Endothelial cell of umbilical vein (primary cell): ENCODE measurements at regions of chr3 and their contacts with region 1.

Region 1: GRCh38 chr3:10417849-10418248 is 87.5 kb downstream of the ATP2B2 start:
- DNase-seq: peak; percentile 3
- H3K4me3 ChIP-seq: no peak overlapping the region
- H3K27ac ChIP-seq: no peak overlapping the region
- H3K4me1 ChIP-seq: no peaks in the 10 kb centered on the region
- H3K27me3 ChIP-seq: no peaks in the 10 kb centered on the region
- CTCF ChIP-seq: no peak
- POLR2A ChIP-seq: no peak

Region 2: GRCh38 chr3:10395671-10396070 is 22.2 kb before region 1 on chr3:
- CTCF ChIA-PET with region 1: no interaction called
- POLR2A ChIA-PET with region 1: no interaction called
- dilution Hi-C with region 1: no loop called
- intact Hi-C with region 1: no loop called
- DNase-seq: no peak
- H3K4me3 ChIP-seq: no peak overlapping the region
- H3K27ac ChIP-seq: no peak overlapping the region
- H3K4me1 ChIP-seq: no peaks in the 10 kb centered on the region
- H3K27me3 ChIP-seq: no peaks in the 10 kb centered on the region
- CTCF ChIP-seq: no peak
- POLR2A ChIP-seq: no peak

Region 3: DNA sequence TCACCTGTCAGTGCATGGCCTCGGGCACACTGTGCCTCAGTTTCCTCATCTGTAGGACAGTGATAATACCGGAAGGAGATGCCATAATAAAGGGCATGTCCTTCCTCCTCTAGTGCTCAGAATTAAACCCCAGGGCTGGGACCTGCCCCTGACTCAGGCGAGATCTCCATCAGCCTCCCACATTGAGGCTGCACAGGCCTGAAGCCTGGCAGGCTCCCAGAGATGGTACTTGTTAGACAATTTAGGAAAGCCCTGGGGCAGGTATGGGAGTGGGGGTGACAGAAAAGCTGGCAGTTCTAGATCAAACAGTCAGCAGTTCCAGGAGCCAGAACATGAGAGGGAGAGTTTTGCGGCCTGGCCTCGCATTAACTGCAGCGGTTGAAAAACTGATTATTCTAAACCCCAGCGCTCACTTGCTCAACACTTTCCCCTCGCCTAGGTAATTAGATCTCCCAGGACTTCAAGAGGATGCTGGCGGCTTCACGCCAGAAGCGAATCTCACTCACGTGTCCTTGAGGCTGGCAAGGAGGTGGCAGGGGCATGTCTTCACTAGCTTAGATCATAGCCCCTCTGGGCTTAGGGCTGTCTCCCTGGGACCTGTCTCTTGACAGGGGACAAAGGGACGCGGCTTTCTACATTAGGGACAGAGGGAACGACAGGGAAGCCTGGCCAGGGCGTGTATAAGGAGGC is 14.5 kb after region 1 on chr3:
- CTCF ChIA-PET with region 1: no interaction called
- POLR2A ChIA-PET with region 1: no interaction called
- dilution Hi-C with region 1: no loop called
- intact Hi-C with region 1: no loop called
- DNase-seq: no peak
- H3K4me3 ChIP-seq: no peak overlapping the region
- H3K27ac ChIP-seq: no peak overlapping the region
- H3K4me1 ChIP-seq: peaks cover 4% of the 10 kb centered on the region
- H3K27me3 ChIP-seq: no peaks in the 10 kb centered on the region
- CTCF ChIP-seq: no peak
- POLR2A ChIP-seq: no peak

Region 4: DNA sequence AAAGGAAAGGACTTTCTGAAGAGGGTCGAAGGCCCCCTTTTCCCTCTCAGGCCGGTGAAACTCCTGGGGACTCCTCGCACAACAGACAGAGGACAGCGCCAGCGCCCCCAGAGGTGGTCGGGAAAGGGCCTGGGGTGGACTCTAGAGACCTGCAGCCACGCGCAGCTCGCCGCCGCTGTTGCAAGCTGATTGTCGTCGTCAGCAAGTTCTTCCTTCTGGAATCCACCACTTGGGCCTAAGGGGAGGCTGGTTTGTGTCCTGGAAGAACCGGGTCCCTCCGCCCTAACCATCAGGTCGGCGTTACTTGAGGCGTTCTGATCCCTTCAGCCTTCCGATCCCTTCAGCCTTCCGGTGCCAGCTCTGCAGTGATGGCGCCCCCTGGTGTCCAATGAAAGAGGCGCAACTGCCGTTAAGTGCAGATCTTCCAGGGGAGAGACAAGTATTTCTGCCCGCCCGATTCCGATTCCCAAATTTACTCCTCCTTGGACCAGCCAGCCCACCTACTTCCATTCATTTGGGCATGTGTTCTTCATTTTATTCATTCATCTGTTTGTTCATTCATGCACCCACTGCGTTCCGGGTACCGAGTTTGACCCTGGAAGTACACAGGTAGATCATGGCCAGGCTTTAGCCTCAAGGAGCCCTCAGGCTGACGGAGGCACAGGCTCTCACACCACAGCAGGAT is 321.0 kb after region 1 on chr3:
- CTCF ChIA-PET with region 1: interaction called, 32 read pairs
- POLR2A ChIA-PET with region 1: no interaction called
- dilution Hi-C with region 1: no loop called
- intact Hi-C with region 1: loop called (anchors 2 kb)
- DNase-seq: peak; percentile 70
- H3K4me3 ChIP-seq: peak overlapping the region in 1 of 3 experiments; percentile 18
- H3K27ac ChIP-seq: no peak overlapping the region
- H3K4me1 ChIP-seq: no peaks in the 10 kb centered on the region
- H3K27me3 ChIP-seq: peaks cover 0 to 5% of the 10 kb centered on the region in 2 experiments
- CTCF ChIP-seq: peak; percentile 75 to 89
- POLR2A ChIP-seq: no peak